ENCODE measurements at regions of chr5 and their contacts with region 1.

Region 1: DNA sequence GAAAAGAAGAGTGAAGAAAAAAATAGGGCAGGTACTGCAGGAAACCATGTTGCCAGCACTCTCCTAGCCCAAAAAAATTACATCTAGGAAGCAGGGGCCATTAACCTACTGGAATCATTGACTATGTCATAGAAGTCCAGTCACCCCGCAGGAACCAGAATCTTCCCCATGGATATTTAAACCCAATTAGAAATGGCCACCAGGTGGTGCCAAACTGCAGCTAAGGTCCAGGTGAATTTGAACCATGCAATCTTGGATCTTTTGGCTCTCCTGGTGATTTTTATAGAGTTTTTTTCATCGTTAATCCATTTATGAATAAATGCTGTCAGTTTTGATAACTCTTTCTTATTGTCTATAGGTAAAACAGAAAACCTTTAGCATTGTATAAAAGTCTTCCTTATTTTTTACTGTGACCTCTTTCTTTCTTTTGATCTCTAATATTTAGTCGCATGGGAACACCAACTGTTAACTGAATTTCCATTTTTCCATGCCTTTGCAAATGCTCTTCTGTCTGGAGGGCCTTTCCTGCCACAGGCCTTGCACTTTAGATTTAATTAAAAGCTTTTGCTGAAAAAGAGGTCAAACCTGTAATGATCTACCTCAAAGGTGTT is 147.5 kb upstream of the FGF10 start:
- DNase-seq: no peak
- H3K4me3 ChIP-seq: no peak overlapping the region
- H3K27ac ChIP-seq: no peak overlapping the region
- H3K4me1 ChIP-seq: no peaks in the 10 kb centered on the region
- H3K27me3 ChIP-seq: no peaks in the 10 kb centered on the region
- CTCF ChIP-seq: peak; percentile 74

Region 2: DNA sequence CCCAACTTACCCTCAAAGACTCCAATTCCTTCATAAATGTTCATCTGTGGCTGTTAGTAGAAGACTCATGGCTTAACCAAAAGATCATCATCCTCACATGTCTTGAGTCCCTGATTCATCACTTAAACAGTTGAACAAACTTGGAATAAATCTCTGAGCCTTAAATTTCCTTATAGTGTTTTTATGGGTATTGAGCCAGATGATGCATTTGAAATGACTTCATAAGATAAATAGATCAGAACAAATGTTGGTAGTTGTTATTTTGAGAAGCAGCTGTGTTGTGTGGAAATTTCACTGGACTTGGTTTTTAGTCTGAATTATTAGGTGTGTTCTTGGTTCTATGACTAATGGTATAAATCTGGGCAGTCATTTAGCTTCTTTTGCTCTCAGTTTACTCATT is 697.5 kb before region 1 on chr5:
- intact Hi-C with region 1: no loop called
- DNase-seq: no peak
- H3K4me3 ChIP-seq: no peak overlapping the region
- H3K27ac ChIP-seq: no peak overlapping the region
- H3K4me1 ChIP-seq: no peaks in the 10 kb centered on the region
- H3K27me3 ChIP-seq: no peaks in the 10 kb centered on the region
- CTCF ChIP-seq: no peak

Region 3: GRCh38 chr5:44443172-44443571 is 93.6 kb before region 1 on chr5:
- intact Hi-C with region 1: no loop called
- DNase-seq: no peak
- H3K4me3 ChIP-seq: no peak overlapping the region
- H3K27ac ChIP-seq: no peak overlapping the region
- H3K4me1 ChIP-seq: no peaks in the 10 kb centered on the region
- H3K27me3 ChIP-seq: no peaks in the 10 kb centered on the region
- CTCF ChIP-seq: no peak

Region 4: DNA sequence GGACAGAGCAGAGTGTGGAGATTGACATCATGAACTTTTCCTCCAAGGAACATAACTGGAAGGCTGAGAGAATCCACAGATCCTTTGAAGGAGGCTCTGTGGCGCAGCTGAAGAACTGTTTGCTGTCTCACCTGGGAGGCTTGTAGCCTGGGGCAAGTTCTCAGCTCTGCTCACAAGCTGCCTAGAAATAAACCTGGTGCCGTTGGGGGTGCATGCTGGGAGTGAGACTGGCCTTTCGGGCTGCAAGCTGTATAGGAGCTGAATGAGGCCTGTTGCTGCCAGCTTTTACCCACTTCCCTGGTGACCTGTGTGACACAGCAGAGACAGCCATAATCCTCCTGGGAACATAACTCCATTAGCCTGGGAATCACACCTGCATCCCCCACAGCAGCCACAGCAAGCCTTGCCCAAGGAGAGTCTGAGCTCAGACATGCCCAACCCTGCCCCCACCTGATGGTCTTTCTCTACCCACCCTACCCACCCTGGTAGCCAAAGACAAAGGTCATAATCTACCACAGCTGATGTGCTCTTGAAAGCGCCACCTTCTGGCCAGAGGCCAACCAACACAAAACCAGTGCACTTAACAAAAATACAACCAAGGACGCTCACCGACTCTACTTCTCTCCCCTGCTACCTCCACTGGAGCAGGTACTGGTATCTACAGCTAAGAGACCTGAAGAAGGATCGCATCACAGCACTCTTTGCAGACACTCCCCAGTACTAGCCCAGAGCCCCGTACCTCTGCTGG is 66.9 kb after region 1 on chr5:
- intact Hi-C with region 1: no loop called
- DNase-seq: no peak
- H3K4me3 ChIP-seq: no peak overlapping the region
- H3K27ac ChIP-seq: no peak overlapping the region
- H3K4me1 ChIP-seq: no peaks in the 10 kb centered on the region
- H3K27me3 ChIP-seq: no peaks in the 10 kb centered on the region
- CTCF ChIP-seq: no peak

Region 5: GRCh38 chr5:44774279-44774880 is 237.6 kb after region 1 on chr5:
- intact Hi-C with region 1: loop called (anchors 5 kb)
- DNase-seq: no peak
- H3K4me3 ChIP-seq: no peak overlapping the region
- H3K27ac ChIP-seq: no peak overlapping the region
- H3K4me1 ChIP-seq: no peaks in the 10 kb centered on the region
- H3K27me3 ChIP-seq: no peaks in the 10 kb centered on the region
- CTCF ChIP-seq: peak; percentile 64

Measured in left ventricle myocardium inferior (tissue), 1 donor.